T-cell (primary cell): ENCODE measurements at regions of chr14 and their contacts with region 1.

Region 1: GRCh38 chr14:39033371-39033770 is 69.7 kb downstream of the SEC23A start:
- DNase-seq: no peak
- ATAC-seq: no peak
- H3K4me3 ChIP-seq: no peak overlapping the region
- H3K4me3 Mint-ChIP-seq: no peak overlapping the region
- H3K27ac ChIP-seq: no peak overlapping the region
- H3K27ac Mint-ChIP-seq: no peak overlapping the region
- H3K4me1 ChIP-seq: no peaks in the 10 kb centered on the region
- H3K4me1 Mint-ChIP-seq: peaks cover 0 to 2% (median 0%) of the 10 kb centered on the region in 3 donors
- H3K27me3 ChIP-seq: no peaks in the 10 kb centered on the region
- H3K27me3 Mint-ChIP-seq: no peaks in the 10 kb centered on the region

Region 2: DNA sequence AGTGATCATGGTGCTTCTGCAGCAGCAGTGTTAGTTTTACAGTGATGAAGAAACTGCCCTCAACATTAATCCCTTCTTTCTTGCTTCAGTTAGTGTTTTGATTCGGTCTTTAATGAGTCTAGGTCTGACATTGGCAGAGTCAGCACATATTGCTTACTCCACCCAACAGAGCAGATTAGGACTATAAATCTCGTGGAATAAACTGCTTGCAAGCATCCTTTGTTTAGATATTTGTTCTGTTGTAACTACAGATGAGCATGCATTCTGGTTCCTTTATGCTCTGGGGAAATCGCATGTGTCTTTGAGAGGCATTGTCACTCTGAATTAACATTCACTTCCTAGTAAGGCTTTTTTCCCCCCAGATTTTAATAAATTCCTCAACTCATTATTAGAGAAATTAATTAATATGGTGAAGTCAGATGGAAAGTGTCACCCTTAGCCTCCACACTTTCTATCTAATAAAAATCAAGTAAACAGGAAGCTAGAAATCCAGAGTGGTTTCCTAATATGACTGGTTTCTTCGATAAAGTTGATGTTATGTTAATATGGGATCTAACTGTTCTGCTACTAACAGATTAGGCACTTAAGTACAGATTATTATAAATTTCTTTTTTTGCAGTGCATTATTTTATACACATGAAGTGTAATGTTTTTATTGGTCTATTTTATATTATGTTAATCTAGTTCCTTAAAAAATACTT is 911.9 kb before region 1 on chr14:
- CTCF ChIA-PET with region 1: no interaction called
- POLR2A ChIA-PET with region 1: interaction called in 1 of 2 experiments, 10 read pairs
- DNase-seq: no peak
- ATAC-seq: no peak
- H3K4me3 ChIP-seq: no peak overlapping the region
- H3K4me3 Mint-ChIP-seq: peak overlapping the region in 1 of 3 donors; percentile 23
- H3K27ac ChIP-seq: no peak overlapping the region
- H3K27ac Mint-ChIP-seq: peak overlapping the region; percentile 18 to 34
- H3K4me1 ChIP-seq: peaks cover 0 to 6% of the 10 kb centered on the region in 2 experiments
- H3K4me1 Mint-ChIP-seq: peaks cover 31 to 48% (median 42%) of the 10 kb centered on the region in 3 donors
- H3K27me3 ChIP-seq: no peaks in the 10 kb centered on the region
- H3K27me3 Mint-ChIP-seq: no peaks in the 10 kb centered on the region